ENCODE measurements at regions of chr7 and their contacts with region 1.

Region 1: DNA sequence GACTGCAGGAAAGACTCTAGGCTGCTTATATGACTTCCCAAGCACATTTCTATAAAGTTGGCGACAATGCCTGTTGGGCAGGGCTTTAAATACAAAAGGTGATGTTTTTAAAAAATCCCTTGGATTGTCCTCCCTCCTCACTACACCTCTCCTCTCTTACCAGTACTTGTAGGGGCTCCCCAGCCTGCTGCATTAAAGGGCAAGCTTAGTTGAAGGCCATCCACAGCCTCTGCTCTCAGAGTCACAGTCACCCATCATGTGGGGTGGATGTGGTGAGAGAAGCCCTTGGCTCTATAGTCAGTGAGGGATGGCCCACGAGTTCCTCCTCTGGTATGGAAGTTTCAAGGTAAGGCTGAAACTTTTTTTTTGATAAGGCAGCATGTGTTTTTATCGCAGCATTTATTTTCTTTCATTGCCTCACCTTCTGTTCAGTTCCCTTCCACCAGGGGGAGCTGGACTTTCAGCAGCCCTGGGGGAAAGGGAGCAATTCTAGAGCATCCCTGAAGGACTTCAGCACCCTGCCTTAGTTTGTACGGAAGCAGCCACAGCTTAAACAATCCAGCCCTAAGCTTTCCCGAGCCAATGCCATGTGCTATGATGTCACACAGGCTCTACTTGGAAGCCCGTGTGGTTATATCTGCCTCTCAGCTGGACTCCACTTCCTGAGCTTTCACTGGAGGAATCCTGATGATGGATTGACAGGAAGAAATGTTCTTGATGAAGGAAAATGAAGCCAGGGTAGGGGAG is 131.9 kb downstream of the CALCR start:
- H3K4me3 ChIP-seq: no peak overlapping the region
- H3K27ac ChIP-seq: no peak overlapping the region
- H3K4me1 ChIP-seq: no peaks in the 10 kb centered on the region
- CTCF ChIP-seq: peak; percentile 58

Region 2: DNA sequence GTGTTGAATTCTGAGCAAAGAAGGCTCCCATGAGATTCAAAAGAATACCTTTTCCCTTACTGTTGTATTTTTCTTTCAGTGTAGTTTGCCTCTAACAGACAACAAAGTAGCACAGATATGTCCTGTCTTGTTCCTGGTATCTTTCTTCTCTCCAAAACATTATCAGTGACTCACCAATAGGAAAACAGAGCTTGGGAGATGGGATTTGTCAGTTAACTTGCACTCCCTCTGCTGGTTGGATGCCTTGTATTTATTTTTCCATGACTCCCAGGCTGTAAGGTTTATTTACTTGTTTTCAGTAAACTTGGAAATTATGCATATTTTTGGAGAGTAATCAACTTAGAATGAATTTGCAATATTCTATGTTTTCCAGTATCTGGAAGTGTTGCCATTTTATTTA is 454.6 kb before region 1 on chr7:
- CTCF ChIA-PET with region 1: no interaction called
- POLR2A ChIA-PET with region 1: no interaction called
- H3K4me3 ChIP-seq: no peak overlapping the region
- H3K27ac ChIP-seq: no peak overlapping the region
- H3K4me1 ChIP-seq: no peaks in the 10 kb centered on the region
- CTCF ChIP-seq: no peak

Region 3: DNA sequence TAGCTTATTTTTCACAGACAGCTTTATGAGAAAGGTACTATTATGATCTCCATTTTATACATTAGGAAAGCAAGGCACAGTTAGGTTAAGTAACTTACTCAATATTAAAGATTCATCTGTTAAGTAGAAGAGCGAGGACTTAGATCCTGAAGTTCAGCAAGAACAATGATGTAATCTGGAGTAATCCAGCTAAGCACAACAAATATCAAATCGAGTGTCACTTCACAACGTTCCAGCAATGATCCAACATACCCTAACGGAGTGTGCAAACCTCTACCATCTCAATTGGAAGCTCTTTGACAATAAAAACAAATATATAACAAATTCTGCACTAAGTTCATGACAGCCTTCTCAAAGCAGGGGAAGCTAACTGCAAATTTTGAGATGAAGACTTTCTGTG is 10.6 kb after region 1 on chr7:
- CTCF ChIA-PET with region 1: interaction called, 19 read pairs
- POLR2A ChIA-PET with region 1: no interaction called
- H3K4me3 ChIP-seq: no peak overlapping the region
- H3K27ac ChIP-seq: no peak overlapping the region
- H3K4me1 ChIP-seq: no peaks in the 10 kb centered on the region
- CTCF ChIP-seq: no peak

Region 4: GRCh38 chr7:93551063-93551904 is 108.6 kb after region 1 on chr7:
- CTCF ChIA-PET with region 1: interaction called, 11 read pairs
- POLR2A ChIA-PET with region 1: no interaction called
- H3K4me3 ChIP-seq: no peak overlapping the region
- H3K27ac ChIP-seq: no peak overlapping the region
- H3K4me1 ChIP-seq: no peaks in the 10 kb centered on the region
- CTCF ChIP-seq: no peak; the same call in 1 of the 2 replicates

Region 5: GRCh38 chr7:93902777-93903423 is 460.2 kb after region 1 on chr7:
- CTCF ChIA-PET with region 1: no interaction called
- POLR2A ChIA-PET with region 1: no interaction called
- H3K4me3 ChIP-seq: no peak overlapping the region
- H3K27ac ChIP-seq: no peak overlapping the region
- H3K4me1 ChIP-seq: no peaks in the 10 kb centered on the region
- CTCF ChIP-seq: 0 out of 2 replicates have a peak, but pooled peaks have one; percentile 27

Measured in HEK293 (cell line).